ENCODE measurements at regions of chr2 and their contacts with region 1.

Region 1: DNA sequence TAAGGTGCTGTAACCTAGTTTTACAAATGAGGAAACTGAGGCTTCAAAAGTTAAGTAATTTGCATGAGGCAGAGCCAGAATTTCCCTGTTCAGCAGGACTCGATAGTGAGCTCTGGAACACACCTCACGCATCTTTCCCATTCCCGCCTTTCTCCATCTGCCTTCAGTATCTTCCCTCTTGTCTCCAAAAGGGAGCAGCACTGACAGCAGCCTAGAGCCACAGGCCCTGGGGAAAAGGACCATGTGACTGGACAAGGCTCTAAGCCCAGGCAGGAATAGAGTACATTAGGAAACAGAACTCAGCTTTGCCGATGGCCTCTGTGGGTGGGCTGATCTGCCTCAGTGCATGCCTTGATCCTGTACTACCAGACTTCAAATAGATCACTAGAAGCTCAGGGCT is 21.5 kb downstream of the GPR155 start:
- DNase-seq: no peak
- ATAC-seq: no peak
- H3K4me3 ChIP-seq: no peak overlapping the region
- H3K27ac ChIP-seq: no peak overlapping the region
- H3K4me1 ChIP-seq: no peaks in the 10 kb centered on the region
- H3K27me3 ChIP-seq: no peaks in the 10 kb centered on the region
- CTCF ChIP-seq: no peak
- POLR2A ChIP-seq: no peak
- RAD21 ChIP-seq: no peak

Region 2: DNA sequence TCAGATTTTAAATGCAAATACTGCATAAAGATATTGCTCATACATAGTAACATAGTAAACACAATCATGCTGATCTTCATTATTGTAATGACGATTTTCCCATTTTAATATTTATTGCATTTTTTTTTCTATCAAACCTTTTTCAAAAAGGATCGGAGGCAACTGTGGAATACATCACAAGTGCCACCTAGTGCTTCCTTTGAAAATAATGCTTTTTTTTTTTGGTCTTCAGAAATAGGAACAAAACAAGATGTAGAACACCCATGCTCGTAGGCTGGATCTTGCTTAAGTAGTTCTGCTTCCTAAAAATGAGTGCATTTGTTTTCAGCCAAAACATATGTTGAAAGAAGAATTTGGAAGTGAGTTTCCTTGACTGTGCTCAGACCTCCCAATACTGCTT is 57.2 kb after region 1 on chr2:
- CTCF ChIA-PET with region 1: interaction called, 6 read pairs
- POLR2A ChIA-PET with region 1: no interaction called
- dilution Hi-C with region 1: no loop called
- in situ Hi-C with region 1: no loop called
- intact Hi-C with region 1: loop called (anchors 1 kb)
- DNase-seq: peak; percentile 11
- ATAC-seq: no peak
- H3K4me3 ChIP-seq: no peak overlapping the region
- H3K27ac ChIP-seq: no peak overlapping the region
- H3K4me1 ChIP-seq: no peaks in the 10 kb centered on the region
- H3K27me3 ChIP-seq: peaks cover 21% of the 10 kb centered on the region
- CTCF ChIP-seq: peak; percentile 47
- POLR2A ChIP-seq: no peak
- RAD21 ChIP-seq: peak; percentile 51

Region 3: GRCh38 chr2:174546581-174547506 is 81.5 kb after region 1 on chr2:
- CTCF ChIA-PET with region 1: interaction called, 34 read pairs
- POLR2A ChIA-PET with region 1: no interaction called
- dilution Hi-C with region 1: no loop called
- in situ Hi-C with region 1: no loop called
- intact Hi-C with region 1: loop called (anchors 1 kb)
- DNase-seq: peak; percentile 43
- ATAC-seq: peak; percentile 89
- H3K4me3 ChIP-seq: no peak overlapping the region
- H3K27ac ChIP-seq: no peak overlapping the region
- H3K4me1 ChIP-seq: no peaks in the 10 kb centered on the region
- H3K27me3 ChIP-seq: peaks cover 8% of the 10 kb centered on the region
- CTCF ChIP-seq: peak; percentile 61
- POLR2A ChIP-seq: no peak
- RAD21 ChIP-seq: peak; percentile 74

Region 4: GRCh38 chr2:174682578-174683391 is 217.5 kb after region 1 on chr2:
- CTCF ChIA-PET with region 1: interaction called, 11 read pairs
- POLR2A ChIA-PET with region 1: no interaction called
- dilution Hi-C with region 1: no loop called
- in situ Hi-C with region 1: no loop called
- intact Hi-C with region 1: loop called (anchors 2 kb)
- DNase-seq: peak; percentile 59
- ATAC-seq: peak; percentile 79
- H3K4me3 ChIP-seq: peak overlapping the region; percentile 93
- H3K27ac ChIP-seq: peak overlapping the region; percentile 64; the same call in 1 of the 2 replicates
- H3K4me1 ChIP-seq: peaks cover 2% of the 10 kb centered on the region; the same call in 1 of the 2 replicates
- H3K27me3 ChIP-seq: no peaks in the 10 kb centered on the region
- CTCF ChIP-seq: no peak
- POLR2A ChIP-seq: peak; percentile 20; the same call in 1 of the 2 replicates
- RAD21 ChIP-seq: no peak

Region 5: GRCh38 chr2:174985630-174986029 is 520.3 kb after region 1 on chr2:
- CTCF ChIA-PET with region 1: no interaction called
- POLR2A ChIA-PET with region 1: no interaction called
- dilution Hi-C with region 1: no loop called
- in situ Hi-C with region 1: loop called (anchors 25 kb)
- intact Hi-C with region 1: no loop called
- DNase-seq: peak; percentile 65
- ATAC-seq: peak; percentile 40; the same call in 1 of the 2 replicates
- H3K4me3 ChIP-seq: no peak overlapping the region
- H3K27ac ChIP-seq: peak overlapping the region; percentile 49; the same call in 1 of the 2 replicates
- H3K4me1 ChIP-seq: peaks cover 3% of the 10 kb centered on the region; the same call in 1 of the 2 replicates
- H3K27me3 ChIP-seq: no peaks in the 10 kb centered on the region
- CTCF ChIP-seq: peak; percentile 84
- POLR2A ChIP-seq: no peak
- RAD21 ChIP-seq: peak; percentile 84

Measured in IMR-90 (cell line).